Activated CD4-positive, alpha-beta T cell treated with anti-CD3 and anti-CD28 coated beads, Interleukin-2, amount 10 ng/mL, durations not matched to agents 24 days and 14 days (primary cell): ENCODE measurements at regions of chr1 and their contacts with region 1.

Region 1: GRCh38 chr1:48236716-48237470 is 14.4 kb downstream of the SLC5A9 start:
- DNase-seq: no peak
- H3K4me3 Mint-ChIP-seq: no peak overlapping the region
- H3K27ac Mint-ChIP-seq: no peak overlapping the region
- H3K4me1 Mint-ChIP-seq: no peaks in the 10 kb centered on the region
- H3K27me3 Mint-ChIP-seq: no peaks in the 10 kb centered on the region

Region 2: DNA sequence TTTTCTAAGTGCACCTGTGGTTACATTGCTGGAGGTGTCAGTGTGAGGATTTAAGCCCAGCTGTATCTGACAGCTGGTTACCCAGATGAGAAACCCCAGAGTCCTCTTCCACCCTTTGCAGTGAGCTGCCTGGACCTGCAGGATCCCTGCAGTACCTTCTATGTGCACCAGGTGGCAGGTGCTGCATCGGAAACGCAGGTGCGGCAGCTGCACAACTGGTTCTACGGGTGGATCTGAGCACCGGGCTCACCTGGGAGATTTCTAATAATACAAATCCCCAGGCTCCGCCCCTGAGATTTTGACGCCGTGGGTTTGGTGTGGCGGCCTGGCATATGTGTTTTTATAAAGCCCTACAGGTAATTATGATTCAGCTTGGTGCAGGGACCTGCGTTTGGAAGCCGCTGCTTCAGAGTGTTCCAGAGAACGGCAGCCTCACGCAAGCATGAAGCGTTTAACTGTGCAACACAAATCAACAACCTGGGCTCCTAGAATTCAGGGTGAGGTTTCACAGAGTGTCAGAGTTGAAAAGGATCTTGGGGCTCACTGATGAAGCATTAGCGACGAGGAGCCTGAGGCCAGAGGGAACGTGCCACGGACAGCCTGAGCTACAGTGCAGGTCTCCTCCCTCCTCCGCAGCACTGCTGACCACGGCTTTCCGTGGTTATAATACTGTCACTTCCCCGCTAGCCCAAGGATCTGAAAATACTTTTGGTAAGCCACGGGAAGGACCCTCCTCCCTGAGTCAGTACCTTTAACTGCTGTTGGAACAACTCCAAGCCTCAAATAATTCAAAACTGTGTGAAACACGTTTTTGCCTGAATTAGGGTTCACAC is 143.0 kb before region 1 on chr1:
- intact Hi-C with region 1: loop called (anchors 2 kb)
- DNase-seq: peak; percentile 92
- H3K4me3 Mint-ChIP-seq: no peak overlapping the region
- H3K27ac Mint-ChIP-seq: no peak overlapping the region
- H3K4me1 Mint-ChIP-seq: peaks cover 3% of the 10 kb centered on the region
- H3K27me3 Mint-ChIP-seq: peaks cover 21% of the 10 kb centered on the region

Region 3: DNA sequence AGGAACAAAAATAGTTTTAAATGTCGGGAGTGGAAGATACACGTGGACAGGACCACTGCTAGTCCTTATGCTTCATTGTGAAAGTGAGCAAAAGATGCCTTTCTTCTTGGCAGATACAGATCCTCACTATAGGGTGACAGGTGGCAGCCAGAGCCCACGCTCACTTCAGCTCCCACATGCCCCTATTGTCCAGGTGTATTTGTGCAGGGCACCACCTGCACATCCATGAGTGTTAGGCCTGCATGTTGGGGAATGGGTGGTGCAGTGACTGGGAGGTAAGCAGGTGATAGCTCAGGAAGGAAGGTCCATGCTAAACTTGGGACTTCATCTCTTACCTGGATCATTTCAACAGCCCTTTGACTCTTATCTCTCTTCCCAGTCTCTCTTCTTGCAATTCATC is 13.0 kb after region 1 on chr1:
- intact Hi-C with region 1: no loop called
- DNase-seq: no peak
- H3K4me3 Mint-ChIP-seq: no peak overlapping the region
- H3K27ac Mint-ChIP-seq: no peak overlapping the region
- H3K4me1 Mint-ChIP-seq: no peaks in the 10 kb centered on the region
- H3K27me3 Mint-ChIP-seq: no peaks in the 10 kb centered on the region